Cardiac septum (tissue), 1 donor: ENCODE measurements at regions of chr2 and their contacts with region 1.

Region 1: GRCh38 chr2:109128048-109128465 is 948 bp upstream of the SH3RF3 start:
- DNase-seq: peak; percentile 93

Region 2: DNA sequence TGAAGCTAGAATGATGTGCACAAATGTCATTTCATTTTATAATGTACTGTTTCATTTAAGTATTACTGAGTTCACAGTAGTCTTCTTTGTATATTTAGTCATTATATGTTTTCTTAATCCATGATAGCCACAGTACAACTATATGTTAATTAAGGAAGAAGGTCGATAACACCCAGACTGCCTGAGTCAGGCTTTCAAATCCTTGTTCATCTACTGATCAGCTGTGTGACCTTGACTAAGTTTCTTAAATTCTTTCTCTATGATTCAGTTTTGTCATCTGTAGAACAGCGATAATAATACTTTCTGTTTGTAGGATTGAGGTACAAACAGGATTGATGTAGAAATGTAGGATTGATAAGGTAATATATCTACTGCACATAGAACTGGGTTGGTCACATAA is 673.6 kb before region 1 on chr2:
- intact Hi-C with region 1: no loop called
- DNase-seq: no peak

Region 3: GRCh38 chr2:109173311-109174171 is 45.5 kb after region 1 on chr2:
- intact Hi-C with region 1: loop called (anchors 5 kb)
- DNase-seq: peak; percentile 81

Region 4: DNA sequence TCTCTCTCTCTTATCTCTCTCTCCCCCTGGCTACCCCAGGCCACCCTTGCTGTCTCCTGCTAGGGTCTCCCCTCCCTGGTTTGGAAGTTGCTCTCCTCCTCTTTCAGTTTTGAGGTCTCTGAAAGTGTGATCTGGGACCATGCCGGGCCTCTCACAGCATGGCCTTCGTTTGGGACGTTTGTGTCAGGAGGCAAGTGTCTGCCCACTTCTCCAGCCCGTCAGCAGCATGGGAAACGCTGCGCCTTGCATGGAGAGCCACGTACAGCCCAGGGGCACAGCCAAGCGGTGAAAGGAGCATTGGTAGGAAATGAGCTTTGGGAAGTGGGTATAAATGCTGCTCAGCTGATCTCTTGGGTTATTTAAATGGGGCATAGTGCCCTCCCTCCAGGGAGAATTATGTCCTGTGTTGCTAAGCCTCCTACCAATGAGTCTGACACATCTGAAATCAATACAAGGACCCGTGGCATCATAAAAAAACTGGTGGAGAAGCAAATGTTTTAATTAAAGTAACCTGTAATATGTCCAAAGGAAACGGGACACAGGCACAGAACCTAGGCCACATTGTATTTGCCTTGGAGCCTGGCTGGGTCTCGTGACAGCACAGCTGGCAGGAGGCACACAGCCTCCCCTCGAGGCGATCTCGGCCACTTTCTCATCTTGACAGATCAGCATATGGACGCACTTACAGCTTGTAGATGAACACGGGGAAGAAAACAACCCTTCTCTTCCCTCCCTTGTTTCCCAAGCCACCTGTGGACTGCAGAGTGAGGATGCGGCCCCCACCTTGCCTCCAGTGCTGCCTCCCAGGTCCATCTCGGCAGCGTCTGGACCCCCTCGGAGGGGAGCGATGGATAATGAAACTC is 73.6 kb after region 1 on chr2:
- intact Hi-C with region 1: loop called (anchors 2 kb)
- DNase-seq: peak; percentile 77

Region 5: GRCh38 chr2:109270500-109271312 is 142.6 kb after region 1 on chr2:
- intact Hi-C with region 1: no loop called
- DNase-seq: no peak

Region 6: GRCh38 chr2:109318150-109318948 is 190.3 kb after region 1 on chr2:
- intact Hi-C with region 1: loop called (anchors 2 kb)
- DNase-seq: no peak

Region 7: DNA sequence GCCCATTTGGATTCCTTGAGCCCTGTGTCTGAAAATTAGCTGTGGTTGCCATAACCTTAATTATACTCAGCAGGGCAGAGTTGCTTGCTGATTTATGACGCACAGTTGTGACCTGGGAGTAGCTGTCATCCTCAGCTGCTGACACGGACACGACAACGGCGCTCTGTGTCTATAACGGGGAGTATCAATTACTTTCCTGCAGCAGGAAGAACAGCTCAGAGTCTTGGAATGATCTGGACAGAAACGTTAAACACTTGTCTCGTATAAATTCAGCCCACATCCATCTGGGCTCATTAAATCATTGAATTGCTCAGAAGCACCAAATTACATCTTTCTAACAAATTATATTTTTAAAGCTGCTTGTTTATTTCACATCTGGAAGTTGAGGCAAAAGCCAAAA is 369.4 kb after region 1 on chr2:
- intact Hi-C with region 1: loop called (anchors 1 kb)
- DNase-seq: no peak